ENCODE measurements at regions of chr5 and their contacts with region 1.

Region 1: DNA sequence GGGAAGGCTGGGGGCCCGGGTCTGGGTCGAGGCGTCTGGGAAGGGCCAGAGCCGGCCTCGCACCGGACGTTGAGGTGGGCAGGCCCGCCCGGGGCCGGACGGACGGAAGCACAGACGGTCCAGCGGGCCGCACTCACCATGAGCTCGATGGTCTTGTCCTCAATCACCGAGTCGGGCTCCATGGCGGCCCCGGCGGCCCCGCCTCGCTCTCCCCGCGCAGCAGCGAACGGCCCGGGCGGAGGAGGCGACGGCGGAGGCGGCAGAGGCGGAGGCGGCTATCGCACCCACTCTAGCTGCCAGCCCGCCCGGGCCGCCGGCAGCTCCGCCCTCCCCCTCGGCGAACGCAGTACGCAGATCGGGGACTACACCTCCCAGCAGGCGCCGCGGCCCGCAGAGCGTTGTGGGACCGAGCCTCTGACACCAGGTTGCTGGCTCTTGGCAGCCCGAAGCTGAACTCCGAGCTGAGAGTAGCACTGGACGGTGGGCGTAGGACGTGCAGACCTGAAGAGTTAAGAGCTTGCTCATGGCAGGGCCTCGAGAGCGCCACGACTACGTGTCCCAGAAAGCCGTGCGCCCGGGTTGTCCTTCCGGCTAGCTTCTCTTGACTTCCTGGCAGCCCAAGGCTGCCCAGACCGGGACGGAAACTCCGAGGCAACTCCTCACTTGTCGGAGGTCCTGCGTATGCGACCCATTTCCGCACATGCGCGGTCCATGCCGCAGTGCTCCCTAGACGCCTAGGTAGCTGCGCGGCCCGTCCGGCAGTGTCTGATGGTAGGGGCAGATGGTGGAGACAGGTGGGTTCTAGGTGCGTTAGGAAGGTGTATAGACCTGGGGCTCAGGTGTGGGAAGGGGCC is at the start of gene FBXW11:
- DNase-seq: peak; percentile 85 to 96 (median 92)
- ATAC-seq: peak; percentile 94
- H3K4me3 ChIP-seq: peak within 1 kb of the TSS; percentile 89
- H3K4me3 Mint-ChIP-seq: peak within 1 kb of the TSS; percentile 93 to 99 (median 97)
- H3K27ac ChIP-seq: peak within 1 kb of the TSS; percentile 91
- H3K27ac Mint-ChIP-seq: peak within 1 kb of the TSS; percentile 94 to 100 (median 98)
- H3K4me1 ChIP-seq: peaks cover 33 to 36% of the 10 kb centered on the region in 2 donors
- H3K4me1 Mint-ChIP-seq: peaks cover 34 to 67% (median 56%) of the 10 kb centered on the region in 7 donors
- H3K27me3 ChIP-seq: no peaks in the 10 kb centered on the region
- H3K27me3 Mint-ChIP-seq: no peaks in the 10 kb centered on the region
- total RNA-seq, gene FBXW11: 29.1 to 40.7 (median 33.6) TPM

Region 2: DNA sequence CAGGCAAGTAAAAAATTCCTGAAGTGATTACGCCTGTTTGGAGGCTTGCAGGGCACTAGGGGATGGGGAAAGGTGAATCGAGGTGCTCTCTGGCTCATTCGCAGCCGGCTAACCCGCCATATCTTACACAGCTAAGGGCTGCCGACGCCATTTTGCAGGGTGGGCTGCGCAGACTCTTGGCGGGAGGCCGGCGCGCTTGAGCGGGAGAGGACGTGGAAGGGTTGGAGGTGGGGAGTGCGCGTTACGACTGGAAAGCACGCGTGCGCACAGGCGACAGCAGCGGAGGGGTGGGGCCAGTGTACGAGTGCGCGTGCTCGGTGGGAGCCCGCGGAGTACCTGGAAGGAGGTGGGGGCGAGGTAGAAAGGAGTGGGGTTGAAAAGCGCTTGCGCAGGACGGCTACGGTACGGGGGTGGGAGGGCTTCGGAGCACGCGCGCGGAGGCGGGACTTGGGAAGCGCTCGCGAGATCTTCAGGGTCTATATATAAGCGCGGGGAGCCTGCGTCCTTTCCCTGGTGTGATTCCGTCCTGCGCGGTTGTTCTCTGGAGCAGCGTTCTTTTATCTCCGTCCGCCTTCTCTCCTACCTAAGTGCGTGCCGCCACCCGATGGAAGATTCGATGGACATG is 619.1 kb before region 1 on chr5 and contains the start of gene NPM1:
- CTCF ChIA-PET with region 1: no interaction called
- POLR2A ChIA-PET with region 1: interaction called, 27 read pairs
- intact Hi-C with region 1: loop called (anchors 1 kb)
- DNase-seq: peak; percentile 90 to 99 (median 98)
- ATAC-seq: peak; percentile 93
- H3K4me3 ChIP-seq: peak within 1 kb of the TSS; percentile 91
- H3K4me3 Mint-ChIP-seq: peak within 1 kb of the TSS; percentile 92 to 99 (median 98)
- H3K27ac ChIP-seq: peak within 1 kb of the TSS; percentile 88
- H3K27ac Mint-ChIP-seq: peak within 1 kb of the TSS; percentile 96 to 100 (median 98)
- H3K4me1 ChIP-seq: peaks cover 31 to 40% of the 10 kb centered on the region in 2 donors
- H3K4me1 Mint-ChIP-seq: peaks cover 25 to 52% (median 49%) of the 10 kb centered on the region in 7 donors
- H3K27me3 ChIP-seq: no peaks in the 10 kb centered on the region
- H3K27me3 Mint-ChIP-seq: peaks cover 0 to 6% (median 0%) of the 10 kb centered on the region in 5 donors
- total RNA-seq, gene NPM1: 807 to 1,238 (median 1,192) TPM

Region 3: GRCh38 chr5:171840066-171840465 is 166.5 kb before region 1 on chr5:
- CTCF ChIA-PET with region 1: no interaction called
- POLR2A ChIA-PET with region 1: no interaction called
- intact Hi-C with region 1: no loop called
- DNase-seq: no peak
- ATAC-seq: no peak
- H3K4me3 ChIP-seq: no peak overlapping the region
- H3K4me3 Mint-ChIP-seq: no peak overlapping the region
- H3K27ac ChIP-seq: no peak overlapping the region
- H3K27ac Mint-ChIP-seq: no peak overlapping the region
- H3K4me1 ChIP-seq: no peaks in the 10 kb centered on the region
- H3K4me1 Mint-ChIP-seq: peaks cover 0 to 12% (median 4%) of the 10 kb centered on the region in 7 donors
- H3K27me3 ChIP-seq: no peaks in the 10 kb centered on the region
- H3K27me3 Mint-ChIP-seq: no peaks in the 10 kb centered on the region

Region 4: DNA sequence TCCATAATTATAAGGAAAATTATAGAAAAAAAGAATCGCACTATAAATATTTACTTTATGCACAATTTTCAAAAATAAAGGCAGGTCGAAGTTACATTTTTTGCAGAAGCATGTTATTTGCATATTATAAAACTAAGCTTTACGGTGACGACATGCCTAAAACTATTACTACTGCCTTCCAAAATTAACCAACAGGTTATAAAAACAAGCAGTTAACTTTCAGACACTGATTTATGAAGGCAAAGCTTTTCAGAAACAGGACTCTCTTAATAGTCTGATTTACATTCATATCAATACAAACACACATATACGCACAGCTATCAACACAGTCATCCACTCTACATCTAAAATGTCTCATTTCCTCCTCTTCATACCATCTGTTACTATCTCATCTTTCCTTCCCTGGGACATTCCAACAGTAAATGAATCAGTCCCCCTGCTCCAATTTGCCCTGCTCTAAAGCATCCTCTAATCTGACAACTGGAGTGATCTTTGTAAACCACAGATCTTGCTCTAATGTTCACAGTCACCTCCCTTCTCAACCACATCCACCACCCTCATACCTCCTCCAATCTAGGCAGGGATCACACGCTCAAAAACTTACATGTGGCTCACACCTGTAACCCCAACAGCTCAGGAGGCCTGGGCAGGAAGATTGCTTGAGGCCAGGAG is 21.7 kb before region 1 on chr5:
- CTCF ChIA-PET with region 1: no interaction called
- POLR2A ChIA-PET with region 1: interaction called, 4 read pairs
- intact Hi-C with region 1: loop called in 1 of 2 experiments (anchors 1 kb)
- DNase-seq: peak in 3 of 9 donors; percentile 20 to 30 (median 20)
- ATAC-seq: peak; percentile 84
- H3K4me3 ChIP-seq: no peak overlapping the region
- H3K4me3 Mint-ChIP-seq: peak overlapping the region in 3 of 10 donors; percentile 10 to 21 (median 13)
- H3K27ac ChIP-seq: no peak overlapping the region
- H3K27ac Mint-ChIP-seq: peak overlapping the region in 4 of 9 donors; percentile 19 to 83 (median 43)
- H3K4me1 ChIP-seq: peaks cover 5 to 20% of the 10 kb centered on the region in 2 donors
- H3K4me1 Mint-ChIP-seq: peaks cover 26 to 49% (median 37%) of the 10 kb centered on the region in 7 donors
- H3K27me3 ChIP-seq: no peaks in the 10 kb centered on the region
- H3K27me3 Mint-ChIP-seq: no peaks in the 10 kb centered on the region

Region 5: DNA sequence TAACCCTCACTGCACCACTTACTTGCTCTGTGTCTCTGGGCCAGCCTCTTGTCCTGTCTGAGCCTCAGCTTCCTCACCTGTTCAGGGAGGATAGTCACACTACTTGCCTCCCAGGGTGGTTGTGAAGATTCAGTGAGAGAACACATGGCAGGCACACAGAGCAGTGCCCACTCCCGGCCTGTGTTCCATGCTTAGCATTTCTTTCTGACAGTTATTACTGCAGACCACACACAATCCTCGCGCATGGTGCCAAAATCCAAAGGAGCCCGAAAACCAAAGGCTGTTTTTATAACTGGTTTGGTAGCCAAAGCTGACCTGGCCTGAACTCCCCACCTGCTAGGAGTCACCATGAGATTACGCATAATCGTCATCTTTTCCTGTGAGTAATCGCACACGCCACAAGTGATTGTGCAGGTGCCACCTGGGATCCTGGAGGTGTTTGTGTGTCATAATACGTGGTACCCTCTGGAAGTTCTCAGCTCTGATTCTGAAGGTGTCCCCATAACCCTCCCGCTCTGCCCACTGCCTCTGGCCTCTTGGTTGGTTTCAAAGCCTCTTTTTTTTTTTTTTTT is 84.5 kb after region 1 on chr5:
- CTCF ChIA-PET with region 1: no interaction called
- POLR2A ChIA-PET with region 1: no interaction called
- intact Hi-C with region 1: no loop called
- DNase-seq: no peak
- ATAC-seq: no peak
- H3K4me3 ChIP-seq: no peak overlapping the region
- H3K4me3 Mint-ChIP-seq: peak overlapping the region in 1 of 10 donors; percentile 27
- H3K27ac ChIP-seq: no peak overlapping the region
- H3K27ac Mint-ChIP-seq: peak overlapping the region in 4 of 9 donors; percentile 25 to 74 (median 64)
- H3K4me1 ChIP-seq: no peaks in the 10 kb centered on the region
- H3K4me1 Mint-ChIP-seq: peaks cover 0 to 10% (median 9%) of the 10 kb centered on the region in 7 donors
- H3K27me3 ChIP-seq: no peaks in the 10 kb centered on the region
- H3K27me3 Mint-ChIP-seq: no peaks in the 10 kb centered on the region

Region 6: GRCh38 chr5:172106511-172107356 is 100.2 kb after region 1 on chr5:
- CTCF ChIA-PET with region 1: interaction called, 5 read pairs
- POLR2A ChIA-PET with region 1: interaction called, 5 read pairs
- intact Hi-C with region 1: loop called in 1 of 2 experiments (anchors 2 kb)
- DNase-seq: peak; percentile 31 to 78 (median 59)
- ATAC-seq: peak; percentile 43
- H3K4me3 ChIP-seq: no peak overlapping the region
- H3K4me3 Mint-ChIP-seq: peak overlapping the region in 8 of 10 donors; percentile 20 to 49 (median 39)
- H3K27ac ChIP-seq: peak overlapping the region; percentile 24
- H3K27ac Mint-ChIP-seq: peak overlapping the region; percentile 18 to 88 (median 81)
- H3K4me1 ChIP-seq: peaks cover 31 to 37% of the 10 kb centered on the region in 2 donors
- H3K4me1 Mint-ChIP-seq: peaks cover 23 to 61% (median 43%) of the 10 kb centered on the region in 7 donors
- H3K27me3 ChIP-seq: no peaks in the 10 kb centered on the region
- H3K27me3 Mint-ChIP-seq: no peaks in the 10 kb centered on the region

Region 7: GRCh38 chr5:172188033-172188892 is 181.7 kb after region 1 on chr5 and contains the start of gene STK10:
- CTCF ChIA-PET with region 1: interaction called, 7 read pairs
- POLR2A ChIA-PET with region 1: interaction called, 25 read pairs
- intact Hi-C with region 1: loop called (anchors 1 to 2 kb)
- DNase-seq: peak; percentile 82 to 92 (median 90)
- ATAC-seq: peak; percentile 86
- H3K4me3 ChIP-seq: peak within 1 kb of the TSS; percentile 89
- H3K4me3 Mint-ChIP-seq: peak within 1 kb of the TSS; percentile 96 to 100 (median 99)
- H3K27ac ChIP-seq: peak within 1 kb of the TSS; percentile 94
- H3K27ac Mint-ChIP-seq: peak within 1 kb of the TSS; percentile 91 to 100 (median 97)
- H3K4me1 ChIP-seq: peaks cover 12 to 15% of the 10 kb centered on the region in 2 donors
- H3K4me1 Mint-ChIP-seq: peaks cover 11 to 35% (median 25%) of the 10 kb centered on the region in 7 donors
- H3K27me3 ChIP-seq: no peaks in the 10 kb centered on the region
- H3K27me3 Mint-ChIP-seq: peaks cover 0 to 11% (median 0%) of the 10 kb centered on the region in 5 donors
- total RNA-seq, gene STK10: 244 to 474 (median 311) TPM

Region 8: DNA sequence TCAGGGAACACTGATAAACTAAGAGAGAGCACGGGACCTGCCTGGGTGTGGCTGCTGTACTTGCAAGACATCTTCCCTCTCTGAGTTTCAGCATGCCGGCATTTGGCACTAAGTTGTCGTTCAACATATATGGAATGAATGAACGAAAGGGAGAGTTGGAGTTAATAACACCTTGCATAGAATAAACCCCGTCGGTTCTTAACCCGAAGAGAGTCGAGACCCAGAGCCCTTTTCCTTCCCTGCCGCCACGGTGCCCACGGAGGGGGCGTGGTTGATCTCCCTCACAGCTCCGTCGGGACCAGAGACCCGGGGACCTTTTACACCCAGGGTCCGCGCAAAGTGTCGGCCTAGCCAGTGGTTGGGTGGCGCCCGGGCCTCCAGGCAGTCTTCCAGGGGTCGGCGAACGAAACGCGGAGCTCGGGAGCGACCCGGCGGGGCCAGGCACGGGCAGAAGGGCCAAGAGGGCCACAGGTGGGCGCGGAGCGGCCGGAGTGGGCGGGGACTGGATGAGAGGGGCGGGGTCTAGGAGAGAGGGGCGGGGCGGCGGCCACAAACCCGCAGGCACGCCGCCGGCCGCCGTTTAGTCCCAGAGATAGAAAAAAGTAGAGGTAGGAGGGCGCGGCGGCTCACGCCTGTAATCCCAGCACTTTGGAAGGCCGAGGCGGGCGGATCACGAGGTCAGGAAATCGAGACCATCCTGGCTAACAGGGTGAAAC is 951.9 kb after region 1 on chr5:
- CTCF ChIA-PET with region 1: no interaction called
- POLR2A ChIA-PET with region 1: interaction called, 3 read pairs
- intact Hi-C with region 1: loop called in 1 of 2 experiments (anchors 10 kb)
- DNase-seq: peak in 7 of 9 donors; percentile 13 to 76 (median 57)
- ATAC-seq: peak; percentile 84
- H3K4me3 ChIP-seq: peak overlapping the region; percentile 90
- H3K4me3 Mint-ChIP-seq: peak overlapping the region; percentile 88 to 98 (median 97)
- H3K27ac ChIP-seq: peak overlapping the region; percentile 95
- H3K27ac Mint-ChIP-seq: peak overlapping the region; percentile 94 to 99 (median 98)
- H3K4me1 ChIP-seq: peaks cover 9 to 10% of the 10 kb centered on the region in 2 donors
- H3K4me1 Mint-ChIP-seq: peaks cover 18 to 45% (median 37%) of the 10 kb centered on the region in 7 donors
- H3K27me3 ChIP-seq: no peaks in the 10 kb centered on the region
- H3K27me3 Mint-ChIP-seq: peaks cover 0 to 4% (median 0%) of the 10 kb centered on the region in 5 donors

Region 9: GRCh38 chr5:173887610-173888472 is 1881.3 kb after region 1 on chr5 and contains the start of gene CPEB4:
- CTCF ChIA-PET with region 1: no interaction called
- POLR2A ChIA-PET with region 1: no interaction called
- intact Hi-C with region 1: loop called in 1 of 2 experiments (anchors 10 kb)
- DNase-seq: peak; percentile 89 to 98 (median 97)
- ATAC-seq: peak; percentile 97
- H3K4me3 ChIP-seq: peak within 1 kb of the TSS; percentile 70
- H3K4me3 Mint-ChIP-seq: peak within 1 kb of the TSS; percentile 91 to 99 (median 96)
- H3K27ac ChIP-seq: peak within 1 kb of the TSS; percentile 82
- H3K27ac Mint-ChIP-seq: peak within 1 kb of the TSS; percentile 94 to 100 (median 98)
- H3K4me1 ChIP-seq: peaks cover 49 to 60% of the 10 kb centered on the region in 2 donors
- H3K4me1 Mint-ChIP-seq: peaks cover 61 to 88% (median 78%) of the 10 kb centered on the region in 7 donors
- H3K27me3 ChIP-seq: no peaks in the 10 kb centered on the region
- H3K27me3 Mint-ChIP-seq: no peaks in the 10 kb centered on the region
- total RNA-seq, gene CPEB4: 12.6 to 40.4 (median 17.5) TPM